Calu3 (cell line): ENCODE measurements at regions of chr16 and their contacts with region 1.

Region 1: GRCh38 chr16:46853713-46854443 is 22.9 kb upstream of the C16orf87 start:
- DNase-seq: peak; percentile 86
- H3K4me3 Mint-ChIP-seq: no peak overlapping the region
- H3K27ac Mint-ChIP-seq: no peak overlapping the region
- H3K4me1 Mint-ChIP-seq: peaks cover 48% of the 10 kb centered on the region
- H3K27me3 Mint-ChIP-seq: no peaks in the 10 kb centered on the region
- CTCF ChIP-seq: peak; percentile 87

Region 2: GRCh38 chr16:46871587-46871986 is 17.7 kb after region 1 on chr16:
- CTCF ChIA-PET with region 1: interaction called, 10 read pairs
- intact Hi-C with region 1: no loop called
- DNase-seq: no peak
- H3K4me3 Mint-ChIP-seq: no peak overlapping the region
- H3K27ac Mint-ChIP-seq: no peak overlapping the region
- H3K4me1 Mint-ChIP-seq: peaks cover 15% of the 10 kb centered on the region
- H3K27me3 Mint-ChIP-seq: no peaks in the 10 kb centered on the region
- CTCF ChIP-seq: no peak

Region 3: GRCh38 chr16:46883690-46884512 is 30.0 kb after region 1 on chr16 and contains the start of gene GPT2:
- CTCF ChIA-PET with region 1: interaction called, 10 read pairs
- intact Hi-C with region 1: loop called (anchors 2 kb)
- DNase-seq: peak; percentile 100
- H3K4me3 Mint-ChIP-seq: peak within 1 kb of the TSS; percentile 82
- H3K27ac Mint-ChIP-seq: peak within 1 kb of the TSS; percentile 97
- H3K4me1 Mint-ChIP-seq: peaks cover 50% of the 10 kb centered on the region
- H3K27me3 Mint-ChIP-seq: no peaks in the 10 kb centered on the region
- CTCF ChIP-seq: peak; percentile 13
- total RNA-seq, gene GPT2: 63.2 and 68.9 TPM in 2 replicates

Region 4: GRCh38 chr16:46908540-46909372 is 54.9 kb after region 1 on chr16:
- CTCF ChIA-PET with region 1: interaction called, 45 read pairs
- intact Hi-C with region 1: loop called (anchors 1 kb)
- DNase-seq: peak; percentile 72
- H3K4me3 Mint-ChIP-seq: no peak overlapping the region
- H3K27ac Mint-ChIP-seq: no peak overlapping the region
- H3K4me1 Mint-ChIP-seq: peaks cover 9% of the 10 kb centered on the region
- H3K27me3 Mint-ChIP-seq: no peaks in the 10 kb centered on the region
- CTCF ChIP-seq: peak; percentile 82

Region 5: DNA sequence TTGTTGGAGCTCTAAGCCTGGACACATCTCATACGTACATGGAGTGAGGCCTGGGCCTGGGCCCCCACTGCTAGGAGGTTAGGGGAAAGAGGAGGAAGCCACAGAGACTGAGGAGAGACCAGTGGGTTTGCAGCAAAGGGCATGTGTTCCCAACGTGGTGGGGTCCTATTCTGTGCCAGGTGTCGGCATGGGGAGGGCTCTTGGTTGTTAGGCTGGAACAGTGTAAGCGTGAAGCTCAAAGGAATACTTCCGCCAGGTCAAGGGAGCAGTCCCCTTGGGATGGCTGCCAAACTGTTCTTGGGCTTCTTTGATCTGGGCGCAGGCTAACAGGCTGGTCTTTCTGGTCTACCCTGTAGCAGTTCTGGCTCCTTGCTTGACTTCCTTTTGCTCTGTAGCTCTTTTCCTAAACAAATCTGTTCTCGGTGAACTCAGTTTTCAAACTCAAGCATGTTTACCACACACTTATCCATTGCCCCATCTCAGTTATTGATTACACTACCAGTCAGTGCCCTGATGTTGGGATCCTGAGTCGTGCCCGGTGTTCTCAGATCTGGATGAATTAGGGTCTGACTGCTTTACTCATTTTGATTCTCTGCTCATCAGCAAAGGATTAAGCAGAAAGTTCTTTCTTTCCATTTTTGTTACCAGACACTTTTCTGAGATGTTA is 66.7 kb after region 1 on chr16:
- CTCF ChIA-PET with region 1: interaction called, 13 read pairs
- intact Hi-C with region 1: no loop called
- DNase-seq: peak; percentile 83
- H3K4me3 Mint-ChIP-seq: peak overlapping the region; percentile 31
- H3K27ac Mint-ChIP-seq: peak overlapping the region; percentile 35
- H3K4me1 Mint-ChIP-seq: peaks cover 25% of the 10 kb centered on the region
- H3K27me3 Mint-ChIP-seq: no peaks in the 10 kb centered on the region
- CTCF ChIP-seq: no peak

Region 6: GRCh38 chr16:46929378-46930332 is 75.8 kb after region 1 on chr16:
- CTCF ChIA-PET with region 1: interaction called, 9 read pairs
- intact Hi-C with region 1: loop called (anchors 2 kb)
- DNase-seq: peak; percentile 80
- H3K4me3 Mint-ChIP-seq: no peak overlapping the region
- H3K27ac Mint-ChIP-seq: peak overlapping the region; percentile 33
- H3K4me1 Mint-ChIP-seq: no peaks in the 10 kb centered on the region
- H3K27me3 Mint-ChIP-seq: no peaks in the 10 kb centered on the region
- CTCF ChIP-seq: peak; percentile 96

Region 7: DNA sequence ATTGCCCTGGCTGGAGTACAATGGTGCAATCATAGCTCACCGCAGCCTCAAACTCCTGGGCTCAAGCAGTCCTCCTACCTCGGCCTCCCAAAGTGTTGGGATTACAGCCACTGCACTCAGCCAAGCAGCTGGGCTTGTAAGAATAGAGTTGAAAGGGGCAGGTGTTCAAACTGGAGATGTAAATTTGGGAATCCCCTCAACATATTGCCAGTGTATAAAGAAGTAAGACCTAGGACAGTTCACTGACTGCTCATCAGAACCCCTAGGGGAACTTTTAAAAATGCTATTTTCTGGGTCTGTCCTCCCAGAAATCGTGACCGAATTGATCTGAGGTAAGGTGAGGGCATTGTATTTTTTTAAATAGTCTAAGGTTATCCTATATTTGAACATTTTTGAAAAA is 128.5 kb after region 1 on chr16:
- CTCF ChIA-PET with region 1: no interaction called
- intact Hi-C with region 1: no loop called
- DNase-seq: no peak
- H3K4me3 Mint-ChIP-seq: no peak overlapping the region
- H3K27ac Mint-ChIP-seq: no peak overlapping the region
- H3K4me1 Mint-ChIP-seq: no peaks in the 10 kb centered on the region
- H3K27me3 Mint-ChIP-seq: no peaks in the 10 kb centered on the region
- CTCF ChIP-seq: no peak

Region 8: GRCh38 chr16:47018223-47018891 is 164.5 kb after region 1 on chr16:
- CTCF ChIA-PET with region 1: no interaction called
- intact Hi-C with region 1: loop called (anchors 10 kb)
- DNase-seq: peak; percentile 72
- H3K4me3 Mint-ChIP-seq: no peak overlapping the region
- H3K27ac Mint-ChIP-seq: no peak overlapping the region
- H3K4me1 Mint-ChIP-seq: no peaks in the 10 kb centered on the region
- H3K27me3 Mint-ChIP-seq: no peaks in the 10 kb centered on the region
- CTCF ChIP-seq: peak; percentile 49

Region 9: GRCh38 chr16:47213761-47214440 is 360.0 kb after region 1 on chr16:
- CTCF ChIA-PET with region 1: no interaction called
- intact Hi-C with region 1: no loop called
- DNase-seq: no peak
- H3K4me3 Mint-ChIP-seq: no peak overlapping the region
- H3K27ac Mint-ChIP-seq: no peak overlapping the region
- H3K4me1 Mint-ChIP-seq: no peaks in the 10 kb centered on the region
- H3K27me3 Mint-ChIP-seq: no peaks in the 10 kb centered on the region
- CTCF ChIP-seq: no peak